Posterior vena cava (tissue), 2 donors: ENCODE measurements at regions of chr18 and their contacts with region 1.

Region 1: DNA sequence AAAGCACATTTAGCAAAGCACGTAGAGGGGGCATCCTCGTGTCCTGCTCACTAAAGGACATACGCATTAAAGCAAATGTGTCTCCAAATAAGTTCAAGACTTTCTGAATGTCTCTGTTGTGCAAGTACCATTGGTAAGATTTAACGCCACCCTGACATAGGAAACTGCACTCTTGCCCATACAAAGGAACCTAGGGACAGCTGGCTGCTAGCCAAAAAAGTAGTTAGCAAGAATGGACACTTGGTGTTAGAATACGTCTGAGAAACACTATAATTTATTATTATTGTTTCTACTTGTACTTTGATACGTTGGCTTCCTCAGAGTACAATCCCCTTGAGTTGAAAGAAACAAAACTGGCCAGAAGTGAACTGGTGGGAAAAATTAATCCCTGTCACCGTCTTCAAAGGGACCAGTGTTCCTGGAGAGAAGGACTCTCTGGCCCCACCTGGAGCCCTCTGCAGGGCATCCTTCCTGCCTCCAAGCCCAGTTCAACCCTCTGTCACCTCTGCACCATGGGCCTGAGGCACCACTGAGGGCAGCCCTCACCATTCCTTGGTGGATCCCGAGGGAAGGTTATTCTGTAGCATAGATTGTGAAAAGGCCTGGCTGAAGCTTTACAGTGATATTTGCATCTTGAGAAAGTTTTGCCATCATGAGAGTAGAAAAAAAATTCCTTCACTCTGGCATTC is 51.4 kb upstream of the APCDD1 start:
- DNase-seq: no peak

Region 2: GRCh38 chr18:10386049-10386448 is 17.0 kb before region 1 on chr18:
- intact Hi-C with region 1: loop called in 1 of 2 experiments (anchors 1 kb)
- DNase-seq: no peak